GM12878 (cell line): ENCODE measurements at regions of chr3 and their contacts with region 1.

Region 1: GRCh38 chr3:185937689-185938463 is at the start of gene TRA2B:
- DNase-seq: peak; percentile 90
- ATAC-seq: peak; percentile 87
- H3K4me3 ChIP-seq: peak within 1 kb of the TSS; percentile 95
- H3K27ac ChIP-seq: peak within 1 kb of the TSS; percentile 100
- H3K4me1 ChIP-seq: no peaks in the 10 kb centered on the region
- H3K27me3 ChIP-seq: no peaks in the 10 kb centered on the region
- CTCF ChIP-seq: peak; percentile 30 to 31 (median 31); a peak in 4 of 6 replicates
- EP300 ChIP-seq: no peak; a peak in 2 of 4 replicates
- POLR2A ChIP-seq: peak; percentile 100
- RAD21 ChIP-seq: no peak
- polyA plus RNA-seq, gene TRA2B: 130 to 153 TPM

Region 2: GRCh38 chr3:186570096-186570940 is 632.4 kb after region 1 on chr3 and contains the start of gene DNAJB11:
- CTCF ChIA-PET with region 1: interaction called, 11 read pairs
- POLR2A ChIA-PET with region 1: interaction called, 8 read pairs
- RAD21 ChIA-PET with region 1: interaction called, 5 read pairs
- SMC1A ChIA-PET with region 1: interaction called, 4 read pairs
- in situ Hi-C with region 1: no loop called
- intact Hi-C with region 1: loop called (anchors 5 kb)
- DNase-seq: peak; percentile 98
- ATAC-seq: peak; percentile 90
- H3K4me3 ChIP-seq: peak within 1 kb of the TSS; percentile 90
- H3K27ac ChIP-seq: peak within 1 kb of the TSS; percentile 85
- H3K4me1 ChIP-seq: peaks cover 10% of the 10 kb centered on the region
- H3K27me3 ChIP-seq: no peaks in the 10 kb centered on the region
- CTCF ChIP-seq: no peak
- EP300 ChIP-seq: no peak
- POLR2A ChIP-seq: peak; percentile 92
- RAD21 ChIP-seq: no peak
- polyA plus RNA-seq, gene DNAJB11: 16.2 to 26.4 TPM